ENCODE measurements at regions of chr12 and their contacts with region 1.

Region 1: DNA sequence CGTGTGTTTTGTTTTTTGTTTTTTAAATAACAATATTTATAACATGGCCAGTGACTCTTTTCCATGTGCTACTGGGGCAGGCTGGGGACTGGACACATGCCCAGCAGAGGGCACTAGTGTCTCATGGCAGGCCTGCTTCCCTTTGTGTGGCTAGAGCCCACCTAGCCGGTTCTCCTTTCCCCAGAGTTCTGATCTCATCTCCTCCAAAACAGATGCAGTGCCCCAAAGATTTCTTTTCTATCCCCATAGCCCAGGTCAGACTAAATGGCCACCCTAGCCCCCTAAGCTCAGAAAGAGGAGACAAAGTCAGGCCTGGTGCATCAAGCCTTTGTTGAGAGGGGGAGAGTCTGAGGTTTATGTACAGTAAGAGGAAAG is 21.2 kb downstream of the PRPF40B start:
- DNase-seq: peak; percentile 75
- ATAC-seq: peak; percentile 96
- H3K4me3 ChIP-seq: no peak overlapping the region
- H3K27ac ChIP-seq: no peak overlapping the region
- H3K4me1 ChIP-seq: no peaks in the 10 kb centered on the region
- H3K27me3 ChIP-seq: no peaks in the 10 kb centered on the region
- CTCF ChIP-seq: peak; percentile 99
- POLR2A ChIP-seq: peak; percentile 25; the same call in 1 of the 2 replicates
- RAD21 ChIP-seq: peak; percentile 100

Region 2: GRCh38 chr12:49740930-49741881 is 96.6 kb after region 1 on chr12 and contains the start of gene TMBIM6:
- CTCF ChIA-PET with region 1: interaction called, 4 read pairs
- POLR2A ChIA-PET with region 1: interaction called, 3 read pairs
- dilution Hi-C with region 1: no loop called
- in situ Hi-C with region 1: no loop called
- intact Hi-C with region 1: loop called (anchors 1 kb)
- DNase-seq: peak; percentile 100
- ATAC-seq: peak; percentile 98
- H3K4me3 ChIP-seq: peak within 1 kb of the TSS; percentile 69
- H3K27ac ChIP-seq: peak within 1 kb of the TSS; percentile 90
- H3K4me1 ChIP-seq: peaks cover 5% of the 10 kb centered on the region
- H3K27me3 ChIP-seq: no peaks in the 10 kb centered on the region
- CTCF ChIP-seq: peak; percentile 95
- POLR2A ChIP-seq: peak; percentile 99
- RAD21 ChIP-seq: peak; percentile 72
- total RNA-seq, gene TMBIM6: 255 and 369 TPM in 2 replicates

Measured in IMR-90 (cell line).